HepG2 (cell line): ENCODE measurements at regions of chr7 and their contacts with region 1.

Region 1: GRCh38 chr7:52249741-52250140 is 785.7 kb upstream of the POM121L12 start:
- DNase-seq: no peak
- ATAC-seq: no peak
- H3K4me3 ChIP-seq: no peak overlapping the region
- H3K27ac ChIP-seq: no peak overlapping the region
- H3K4me1 ChIP-seq: no peaks in the 10 kb centered on the region
- H3K27me3 ChIP-seq: no peaks in the 10 kb centered on the region
- CTCF ChIP-seq: no peak
- EP300 ChIP-seq: no peak
- POLR2A ChIP-seq: no peak
- RAD21 ChIP-seq: no peak

Region 2: GRCh38 chr7:52197221-52197620 is 52.5 kb before region 1 on chr7:
- CTCF ChIA-PET with region 1: no interaction called
- POLR2A ChIA-PET with region 1: no interaction called
- in situ Hi-C with region 1: no loop called
- intact Hi-C with region 1: no loop called
- DNase-seq: no peak
- ATAC-seq: no peak
- H3K4me3 ChIP-seq: no peak overlapping the region
- H3K27ac ChIP-seq: no peak overlapping the region
- H3K4me1 ChIP-seq: no peaks in the 10 kb centered on the region
- H3K27me3 ChIP-seq: no peaks in the 10 kb centered on the region
- CTCF ChIP-seq: no peak
- EP300 ChIP-seq: no peak
- POLR2A ChIP-seq: no peak
- RAD21 ChIP-seq: no peak

Region 3: DNA sequence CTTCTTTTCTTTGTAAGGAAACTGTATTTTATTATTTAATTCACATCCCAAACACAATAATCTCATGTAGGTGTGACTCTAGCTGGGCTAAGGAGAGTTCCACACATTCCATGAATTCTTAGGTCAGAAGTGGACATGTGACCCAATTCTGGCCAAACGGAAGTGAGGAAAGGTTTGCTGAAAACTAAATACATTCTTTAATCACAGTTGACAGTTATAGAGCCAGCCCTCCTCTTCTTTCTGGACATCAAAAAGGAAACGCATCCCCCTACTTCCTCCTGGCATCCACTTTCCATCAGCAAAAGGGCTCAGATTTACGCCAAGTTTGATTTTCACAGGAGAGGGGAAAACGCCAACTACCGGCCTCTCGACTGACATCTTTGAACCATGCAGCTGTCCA is 11.3 kb after region 1 on chr7:
- CTCF ChIA-PET with region 1: no interaction called
- POLR2A ChIA-PET with region 1: no interaction called
- in situ Hi-C with region 1: no loop called
- intact Hi-C with region 1: no loop called
- DNase-seq: no peak
- ATAC-seq: no peak
- H3K4me3 ChIP-seq: no peak overlapping the region
- H3K27ac ChIP-seq: no peak overlapping the region
- H3K4me1 ChIP-seq: no peaks in the 10 kb centered on the region
- H3K27me3 ChIP-seq: no peaks in the 10 kb centered on the region
- CTCF ChIP-seq: no peak
- EP300 ChIP-seq: no peak
- POLR2A ChIP-seq: no peak
- RAD21 ChIP-seq: no peak

Region 4: DNA sequence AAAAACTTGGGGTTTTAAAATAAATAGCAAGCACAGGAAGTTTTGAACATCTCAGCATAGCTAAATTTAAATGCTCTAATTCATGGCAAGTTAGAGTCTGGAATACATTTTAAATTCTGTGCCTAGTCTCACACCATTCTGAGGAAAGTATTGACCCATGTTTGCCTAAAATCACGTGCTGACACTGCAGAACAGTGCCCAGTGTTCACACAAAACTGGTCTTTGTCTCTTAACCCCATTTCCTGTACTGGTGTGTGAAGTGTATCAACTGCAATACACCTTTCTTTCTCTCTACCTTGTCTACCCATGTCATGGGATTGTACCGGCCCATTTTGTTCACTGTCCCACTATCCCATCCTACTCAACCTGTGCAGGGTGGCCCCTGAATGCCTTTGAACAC is 35.9 kb after region 1 on chr7:
- CTCF ChIA-PET with region 1: no interaction called
- POLR2A ChIA-PET with region 1: no interaction called
- in situ Hi-C with region 1: no loop called
- intact Hi-C with region 1: loop called (anchors 5 kb)
- DNase-seq: no peak
- ATAC-seq: no peak
- H3K4me3 ChIP-seq: no peak overlapping the region
- H3K27ac ChIP-seq: no peak overlapping the region
- H3K4me1 ChIP-seq: no peaks in the 10 kb centered on the region
- H3K27me3 ChIP-seq: no peaks in the 10 kb centered on the region
- CTCF ChIP-seq: no peak
- EP300 ChIP-seq: no peak
- POLR2A ChIP-seq: no peak
- RAD21 ChIP-seq: no peak